ENCODE measurements at regions of chr4 and their contacts with region 1.

Region 1: GRCh38 chr4:127975121-127975770 is 10.0 kb downstream of the ABHD18 start:
- H3K4me3 ChIP-seq: no peak overlapping the region
- H3K27ac ChIP-seq: no peak overlapping the region
- H3K4me1 ChIP-seq: no peaks in the 10 kb centered on the region
- CTCF ChIP-seq: no peak

Region 2: DNA sequence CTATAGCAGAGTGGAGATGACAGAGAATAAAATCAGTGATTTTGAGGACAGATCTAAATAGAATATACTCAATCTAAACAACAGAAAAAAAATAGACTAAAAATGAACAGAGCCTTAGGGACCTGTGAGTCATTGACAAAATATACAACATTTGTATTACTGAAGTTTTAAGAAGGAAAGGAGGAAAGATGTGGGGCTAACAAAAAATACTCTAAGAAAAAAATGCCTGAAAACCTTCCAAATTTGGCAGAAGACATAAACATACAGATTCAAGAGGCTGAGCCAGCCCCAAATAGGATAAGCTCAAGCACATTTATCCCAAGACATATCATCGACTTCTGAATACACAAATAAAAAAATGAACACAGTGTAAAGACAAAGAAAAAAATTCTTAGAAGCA is 466.1 kb before region 1 on chr4:
- CTCF ChIA-PET with region 1: no interaction called
- POLR2A ChIA-PET with region 1: no interaction called
- H3K4me3 ChIP-seq: no peak overlapping the region
- H3K27ac ChIP-seq: no peak overlapping the region
- H3K4me1 ChIP-seq: no peaks in the 10 kb centered on the region
- CTCF ChIP-seq: no peak

Region 3: GRCh38 chr4:127985995-127986394 is 10.7 kb after region 1 on chr4:
- CTCF ChIA-PET with region 1: no interaction called
- POLR2A ChIA-PET with region 1: interaction called, 10 read pairs
- H3K4me3 ChIP-seq: no peak overlapping the region
- H3K27ac ChIP-seq: no peak overlapping the region
- H3K4me1 ChIP-seq: no peaks in the 10 kb centered on the region
- CTCF ChIP-seq: no peak

Region 4: DNA sequence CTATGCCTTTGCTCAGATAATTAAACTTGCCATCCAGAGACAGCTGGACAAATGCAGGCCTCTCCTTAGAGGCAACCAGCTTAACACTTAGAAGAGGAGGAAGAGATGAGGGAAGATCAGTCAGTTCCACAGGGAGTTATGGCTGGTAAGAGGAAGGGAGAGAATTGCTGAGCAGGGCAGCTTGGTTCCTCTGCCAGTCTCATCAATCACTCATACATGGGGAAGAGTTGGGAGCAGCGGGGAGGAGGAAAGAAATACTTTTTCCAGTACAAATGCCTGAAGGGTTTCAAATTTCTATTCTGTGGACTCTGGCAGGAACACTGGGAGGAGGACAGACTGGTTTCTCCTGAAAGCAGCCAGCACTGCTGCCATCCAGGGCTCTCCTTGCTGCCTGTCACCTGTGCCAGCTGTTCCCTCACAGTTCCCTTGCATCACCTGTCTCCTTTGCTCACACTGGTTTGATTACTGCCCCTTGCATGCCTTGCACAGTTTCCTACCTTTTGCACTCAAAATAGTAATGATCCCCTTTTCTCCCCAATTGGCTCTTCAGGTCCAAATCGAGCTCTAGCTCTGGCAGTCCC is 252.8 kb after region 1 on chr4:
- CTCF ChIA-PET with region 1: no interaction called
- POLR2A ChIA-PET with region 1: no interaction called
- H3K4me3 ChIP-seq: no peak overlapping the region
- H3K27ac ChIP-seq: no peak overlapping the region
- H3K4me1 ChIP-seq: no peaks in the 10 kb centered on the region
- CTCF ChIP-seq: no peak